ENCODE measurements at regions of chr12 and their contacts with region 1.

Region 1: GRCh38 chr12:128387811-128388422 is 120.9 kb downstream of the TMEM132C start:
- DNase-seq: peak; percentile 59
- ATAC-seq: no peak
- H3K4me3 Mint-ChIP-seq: no peak overlapping the region
- H3K27ac Mint-ChIP-seq: no peak overlapping the region
- H3K4me1 Mint-ChIP-seq: no peaks in the 10 kb centered on the region
- H3K27me3 Mint-ChIP-seq: no peaks in the 10 kb centered on the region

Region 2: DNA sequence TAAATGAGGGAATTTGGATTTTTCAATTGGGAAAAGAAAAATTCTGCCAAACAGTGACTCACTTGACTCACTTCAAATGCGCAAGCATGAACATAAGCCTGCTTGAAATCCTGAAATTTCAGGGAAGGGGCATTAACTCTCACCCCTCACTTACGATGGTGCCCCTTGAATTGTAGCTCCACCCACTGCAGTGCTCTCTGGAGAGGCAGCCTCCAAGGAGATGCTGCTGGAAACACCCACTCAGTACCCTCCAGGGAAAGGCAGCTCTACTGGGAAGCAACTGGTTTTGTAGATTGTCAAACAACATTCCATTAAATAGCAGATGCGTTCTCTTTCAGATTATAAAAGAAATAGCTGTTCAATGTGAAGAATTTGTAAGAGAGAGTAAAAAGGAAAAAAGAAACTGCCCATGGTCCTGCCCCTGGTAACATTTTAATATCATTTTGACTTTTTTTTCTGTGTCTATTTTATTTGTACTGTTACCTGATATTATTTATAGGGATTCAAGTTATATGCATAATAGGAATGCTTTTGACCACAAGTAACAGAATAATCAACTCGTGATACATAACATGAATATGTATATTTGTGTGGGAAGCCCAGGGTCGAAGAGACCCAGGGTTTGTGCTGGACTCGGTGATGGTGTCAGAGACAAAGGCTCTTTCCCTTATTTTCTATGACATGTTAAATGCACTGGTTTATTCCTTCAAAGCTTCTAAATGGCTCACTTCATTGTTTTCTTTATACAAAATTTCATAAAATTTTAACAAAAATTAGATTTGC is 152.1 kb before region 1 on chr12:
- CTCF ChIA-PET with region 1: no interaction called
- POLR2A ChIA-PET with region 1: no interaction called
- intact Hi-C with region 1: no loop called
- DNase-seq: no peak
- ATAC-seq: no peak
- H3K4me3 Mint-ChIP-seq: no peak overlapping the region
- H3K27ac Mint-ChIP-seq: no peak overlapping the region
- H3K4me1 Mint-ChIP-seq: no peaks in the 10 kb centered on the region
- H3K27me3 Mint-ChIP-seq: no peaks in the 10 kb centered on the region

Region 3: GRCh38 chr12:128259556-128260070 is 128.3 kb before region 1 on chr12:
- CTCF ChIA-PET with region 1: interaction called, 4 read pairs
- POLR2A ChIA-PET with region 1: no interaction called
- intact Hi-C with region 1: loop called in 1 of 2 experiments (anchors 2 kb)
- DNase-seq: peak; percentile 41
- ATAC-seq: no peak
- H3K4me3 Mint-ChIP-seq: no peak overlapping the region
- H3K27ac Mint-ChIP-seq: no peak overlapping the region
- H3K4me1 Mint-ChIP-seq: no peaks in the 10 kb centered on the region
- H3K27me3 Mint-ChIP-seq: peaks cover 9% of the 10 kb centered on the region